GM12878 (cell line): ENCODE measurements at regions of chr1 and their contacts with region 1.

Region 1: GRCh38 chr1:116268204-116268603 is 104.8 kb upstream of the ATP1A1 start:
- DNase-seq: no peak
- ATAC-seq: peak; percentile 52
- H3K4me3 ChIP-seq: no peak overlapping the region
- H3K27ac ChIP-seq: no peak overlapping the region
- H3K4me1 ChIP-seq: no peaks in the 10 kb centered on the region
- H3K27me3 ChIP-seq: no peaks in the 10 kb centered on the region
- CTCF ChIP-seq: no peak
- EP300 ChIP-seq: no peak
- POLR2A ChIP-seq: no peak
- RAD21 ChIP-seq: no peak

Region 2: GRCh38 chr1:116288201-116288761 is 20.1 kb after region 1 on chr1:
- CTCF ChIA-PET with region 1: no interaction called
- POLR2A ChIA-PET with region 1: no interaction called
- RAD21 ChIA-PET with region 1: no interaction called
- SMC1A ChIA-PET with region 1: interaction called, 3 read pairs
- in situ Hi-C with region 1: no loop called
- intact Hi-C with region 1: loop called (anchors 2 kb)
- DNase-seq: peak; percentile 57
- ATAC-seq: peak; percentile 98
- H3K4me3 ChIP-seq: no peak overlapping the region
- H3K27ac ChIP-seq: no peak overlapping the region
- H3K4me1 ChIP-seq: peaks cover 15% of the 10 kb centered on the region
- H3K27me3 ChIP-seq: no peaks in the 10 kb centered on the region
- CTCF ChIP-seq: no peak
- EP300 ChIP-seq: peak in 1 of 2 experiments; percentile 23; a peak in 1 of 4 replicates
- POLR2A ChIP-seq: no peak
- RAD21 ChIP-seq: 0 out of 2 replicates have a peak, but pooled peaks have one; percentile 7